ENCODE measurements at regions of chr2 and their contacts with region 1.

Region 1: DNA sequence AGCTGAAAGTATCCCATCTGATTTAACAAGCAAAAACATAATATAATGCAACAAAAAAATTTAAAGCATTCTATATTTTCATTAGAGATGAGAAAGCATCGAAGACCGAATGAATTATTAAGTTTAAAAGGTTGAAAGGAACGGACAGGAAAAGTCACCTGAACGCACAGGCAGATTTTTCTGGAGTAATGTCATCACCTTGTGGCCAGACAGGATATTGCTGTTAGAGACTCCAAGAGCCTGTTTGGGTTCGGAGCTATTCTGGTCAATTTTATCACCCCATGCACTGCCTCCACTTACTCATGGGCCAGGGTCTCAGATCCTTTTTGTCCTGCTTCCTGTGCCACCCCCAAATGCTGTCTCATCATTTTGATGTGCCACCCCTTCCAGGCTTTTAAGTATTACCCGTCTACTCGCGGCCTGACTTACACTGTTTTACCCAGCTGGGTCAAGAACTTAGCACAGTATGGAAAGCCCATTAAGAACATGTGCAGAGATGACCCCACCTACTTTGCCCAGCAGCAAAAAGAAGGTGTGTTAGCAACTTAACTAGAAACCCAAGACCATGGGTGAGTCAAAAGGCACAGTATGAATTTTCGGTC is 27.3 kb downstream of the GKN2 start:
- DNase-seq: peak in 7 of 9 donors; percentile 40 to 70 (median 63)
- ATAC-seq: peak; percentile 84
- H3K4me3 ChIP-seq: no peak overlapping the region
- H3K4me3 Mint-ChIP-seq: no peak overlapping the region
- H3K27ac ChIP-seq: no peak overlapping the region
- H3K27ac Mint-ChIP-seq: peak overlapping the region in 2 of 9 donors; percentile 48 to 53
- H3K4me1 ChIP-seq: no peaks in the 10 kb centered on the region
- H3K4me1 Mint-ChIP-seq: peaks cover 0 to 8% (median 0%) of the 10 kb centered on the region in 7 donors
- H3K27me3 ChIP-seq: no peaks in the 10 kb centered on the region
- H3K27me3 Mint-ChIP-seq: peaks cover 0 to 31% (median 4%) of the 10 kb centered on the region in 5 donors

Region 2: GRCh38 chr2:68362069-68362468 is 563.3 kb before region 1 on chr2:
- CTCF ChIA-PET with region 1: no interaction called
- POLR2A ChIA-PET with region 1: no interaction called
- intact Hi-C with region 1: loop called (anchors 1 to 10 kb)
- DNase-seq: peak; percentile 62 to 81 (median 76)
- ATAC-seq: peak; percentile 87
- H3K4me3 ChIP-seq: peak overlapping the region; percentile 37
- H3K4me3 Mint-ChIP-seq: peak overlapping the region in 9 of 10 donors; percentile 21 to 87 (median 74)
- H3K27ac ChIP-seq: no peak overlapping the region
- H3K27ac Mint-ChIP-seq: peak overlapping the region in 6 of 9 donors; percentile 10 to 81 (median 18)
- H3K4me1 ChIP-seq: peaks cover 0 to 20% of the 10 kb centered on the region in 2 donors
- H3K4me1 Mint-ChIP-seq: peaks cover 6 to 19% (median 10%) of the 10 kb centered on the region in 7 donors
- H3K27me3 ChIP-seq: no peaks in the 10 kb centered on the region
- H3K27me3 Mint-ChIP-seq: peaks cover 0 to 23% (median 0%) of the 10 kb centered on the region in 5 donors

Region 3: DNA sequence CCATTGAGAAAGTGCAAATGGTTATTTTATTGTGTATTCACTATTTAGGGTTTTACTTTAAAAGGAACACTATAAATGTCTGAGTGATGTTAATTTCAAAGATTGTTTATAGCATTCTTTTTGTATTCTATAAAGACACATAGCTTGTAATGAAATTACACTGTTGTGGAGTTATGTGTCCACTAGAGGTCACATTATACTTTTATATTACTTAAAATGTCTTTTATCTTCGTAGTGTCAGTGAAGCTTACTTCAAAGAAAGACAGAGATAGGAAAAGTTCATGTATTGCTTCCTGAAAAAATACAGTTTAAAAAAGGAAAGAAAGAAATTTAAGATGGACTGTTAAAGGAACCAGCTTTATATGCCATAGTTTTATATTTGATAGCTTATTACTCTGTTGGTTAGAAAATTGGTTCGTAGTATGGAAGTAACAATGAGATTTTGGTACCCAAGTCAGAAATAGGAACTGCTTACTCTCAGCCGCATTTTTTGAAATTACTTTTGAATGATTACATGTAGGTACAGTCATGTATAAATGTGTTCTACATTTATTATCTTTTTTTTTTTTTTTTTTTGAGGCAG is 437.5 kb before region 1 on chr2:
- CTCF ChIA-PET with region 1: interaction called, 41 read pairs
- POLR2A ChIA-PET with region 1: no interaction called
- intact Hi-C with region 1: loop called (anchors 1 kb)
- DNase-seq: peak in 4 of 9 donors; percentile 22 to 38 (median 28)
- ATAC-seq: peak; percentile 72
- H3K4me3 ChIP-seq: no peak overlapping the region
- H3K4me3 Mint-ChIP-seq: no peak overlapping the region
- H3K27ac ChIP-seq: no peak overlapping the region
- H3K27ac Mint-ChIP-seq: no peak overlapping the region
- H3K4me1 ChIP-seq: no peaks in the 10 kb centered on the region
- H3K4me1 Mint-ChIP-seq: peaks cover 0 to 5% (median 2%) of the 10 kb centered on the region in 7 donors
- H3K27me3 ChIP-seq: no peaks in the 10 kb centered on the region
- H3K27me3 Mint-ChIP-seq: no peaks in the 10 kb centered on the region

Region 4: DNA sequence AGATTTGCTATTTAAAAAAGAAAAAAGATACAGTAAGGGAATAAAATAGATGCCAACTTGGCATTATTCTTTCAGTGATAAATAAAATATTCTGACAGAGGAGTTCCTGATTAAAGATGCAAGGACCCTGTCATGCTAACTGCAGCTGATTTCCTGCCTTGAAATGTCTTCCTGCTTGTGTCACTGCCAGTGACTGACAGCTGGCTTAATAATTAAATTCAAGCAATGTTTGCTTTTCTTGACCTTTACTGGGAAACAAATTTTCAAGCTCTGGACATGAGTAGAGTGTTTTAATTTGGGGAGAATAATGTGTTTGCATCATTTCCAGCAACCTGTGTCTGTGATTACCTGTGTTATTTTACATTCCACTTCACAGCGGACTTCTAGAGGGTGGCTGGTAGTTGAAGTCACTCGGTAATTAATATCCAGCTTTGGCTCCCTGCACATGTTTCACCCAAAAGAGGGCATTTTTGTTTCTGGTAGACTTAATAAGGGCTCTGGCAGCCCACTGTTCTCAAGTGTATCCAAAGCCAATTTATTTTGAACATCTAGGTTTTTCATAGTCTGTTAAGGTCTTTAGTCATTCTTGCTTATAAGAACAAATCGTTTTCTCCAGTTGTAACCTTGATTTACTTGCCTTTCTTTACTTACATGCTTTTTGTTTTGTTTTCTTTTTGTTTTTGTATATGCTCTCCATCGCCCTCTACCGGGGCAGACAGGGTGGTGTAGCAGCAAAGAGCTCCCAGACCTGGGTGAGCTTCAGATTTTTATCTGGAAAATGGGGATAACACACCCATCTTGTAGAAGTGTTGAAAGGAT is 330.5 kb before region 1 on chr2:
- CTCF ChIA-PET with region 1: interaction called, 3 read pairs
- POLR2A ChIA-PET with region 1: no interaction called
- intact Hi-C with region 1: loop called (anchors 1 kb)
- DNase-seq: peak; percentile 5 to 46 (median 39)
- ATAC-seq: peak; percentile 74
- H3K4me3 ChIP-seq: no peak overlapping the region
- H3K4me3 Mint-ChIP-seq: peak overlapping the region in 3 of 10 donors; percentile 2 to 23 (median 4)
- H3K27ac ChIP-seq: no peak overlapping the region
- H3K27ac Mint-ChIP-seq: peak overlapping the region in 2 of 9 donors; percentile 1 to 5
- H3K4me1 ChIP-seq: no peaks in the 10 kb centered on the region
- H3K4me1 Mint-ChIP-seq: peaks cover 3 to 10% (median 7%) of the 10 kb centered on the region in 7 donors
- H3K27me3 ChIP-seq: no peaks in the 10 kb centered on the region
- H3K27me3 Mint-ChIP-seq: peaks cover 3 to 25% (median 16%) of the 10 kb centered on the region in 5 donors

Region 5: GRCh38 chr2:68742626-68743415 is 182.6 kb before region 1 on chr2:
- CTCF ChIA-PET with region 1: interaction called, 15 read pairs
- POLR2A ChIA-PET with region 1: interaction called, 3 read pairs
- intact Hi-C with region 1: no loop called
- DNase-seq: no peak
- ATAC-seq: no peak
- H3K4me3 ChIP-seq: peak overlapping the region; percentile 27
- H3K4me3 Mint-ChIP-seq: peak overlapping the region in 8 of 10 donors; percentile 43 to 82 (median 67)
- H3K27ac ChIP-seq: peak overlapping the region; percentile 5
- H3K27ac Mint-ChIP-seq: peak overlapping the region in 8 of 9 donors; percentile 42 to 87 (median 76)
- H3K4me1 ChIP-seq: peaks cover 93% of the 10 kb centered on the region in 2 donors
- H3K4me1 Mint-ChIP-seq: peaks cover 69 to 98% (median 93%) of the 10 kb centered on the region in 7 donors
- H3K27me3 ChIP-seq: no peaks in the 10 kb centered on the region
- H3K27me3 Mint-ChIP-seq: no peaks in the 10 kb centered on the region

Region 6: GRCh38 chr2:68837164-68837860 is 88.1 kb before region 1 on chr2:
- CTCF ChIA-PET with region 1: interaction called, 11 read pairs
- POLR2A ChIA-PET with region 1: interaction called, 3 read pairs
- intact Hi-C with region 1: loop called (anchors 1 kb)
- DNase-seq: peak; percentile 25 to 67 (median 57)
- ATAC-seq: peak; percentile 77
- H3K4me3 ChIP-seq: no peak overlapping the region
- H3K4me3 Mint-ChIP-seq: no peak overlapping the region
- H3K27ac ChIP-seq: no peak overlapping the region
- H3K27ac Mint-ChIP-seq: peak overlapping the region in 2 of 9 donors; percentile 15 to 75
- H3K4me1 ChIP-seq: peaks cover 0 to 13% of the 10 kb centered on the region in 2 donors
- H3K4me1 Mint-ChIP-seq: peaks cover 15 to 51% (median 43%) of the 10 kb centered on the region in 7 donors
- H3K27me3 ChIP-seq: no peaks in the 10 kb centered on the region
- H3K27me3 Mint-ChIP-seq: no peaks in the 10 kb centered on the region

Region 7: GRCh38 chr2:68915393-68915792 is 10.0 kb before region 1 on chr2:
- CTCF ChIA-PET with region 1: no interaction called
- POLR2A ChIA-PET with region 1: no interaction called
- intact Hi-C with region 1: no loop called
- DNase-seq: no peak
- ATAC-seq: no peak
- H3K4me3 ChIP-seq: no peak overlapping the region
- H3K4me3 Mint-ChIP-seq: no peak overlapping the region
- H3K27ac ChIP-seq: no peak overlapping the region
- H3K27ac Mint-ChIP-seq: no peak overlapping the region
- H3K4me1 ChIP-seq: peaks cover 9 to 33% of the 10 kb centered on the region in 2 donors
- H3K4me1 Mint-ChIP-seq: peaks cover 0 to 8% (median 0%) of the 10 kb centered on the region in 7 donors
- H3K27me3 ChIP-seq: no peaks in the 10 kb centered on the region
- H3K27me3 Mint-ChIP-seq: no peaks in the 10 kb centered on the region

Measured in naive thymus-derived CD4-positive, alpha-beta T cell (primary cell).